ENCODE measurements at regions of chr21 and their contacts with region 1.

Region 1: DNA sequence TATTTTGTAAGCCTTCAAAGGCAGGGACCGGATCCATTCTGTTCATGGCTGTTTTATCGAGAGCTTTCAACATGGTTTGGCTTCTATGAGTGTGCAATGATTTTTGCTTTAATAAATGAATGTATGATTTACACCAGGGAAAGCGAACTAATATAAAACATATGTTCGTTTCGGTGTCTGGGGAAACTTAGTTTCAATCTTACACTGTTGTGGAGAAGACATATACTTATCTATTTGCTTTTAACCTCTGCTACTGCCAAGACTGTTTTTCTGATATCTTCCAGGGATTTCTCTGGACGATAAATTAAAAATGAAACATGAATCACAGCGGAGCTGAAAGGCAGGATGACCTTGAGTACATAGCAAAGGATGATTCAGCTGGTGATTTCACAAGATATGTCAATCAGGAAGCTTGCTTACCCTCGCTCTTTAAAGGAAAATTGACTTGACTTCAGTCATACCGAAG is 14.7 kb upstream of the CYYR1 start:
- DNase-seq: no peak
- ATAC-seq: no peak
- H3K4me3 ChIP-seq: no peak overlapping the region
- H3K27ac ChIP-seq: no peak overlapping the region
- H3K4me1 ChIP-seq: no peaks in the 10 kb centered on the region
- H3K27me3 ChIP-seq: no peaks in the 10 kb centered on the region
- CTCF ChIP-seq: no peak
- POLR2A ChIP-seq: no peak

Region 2: DNA sequence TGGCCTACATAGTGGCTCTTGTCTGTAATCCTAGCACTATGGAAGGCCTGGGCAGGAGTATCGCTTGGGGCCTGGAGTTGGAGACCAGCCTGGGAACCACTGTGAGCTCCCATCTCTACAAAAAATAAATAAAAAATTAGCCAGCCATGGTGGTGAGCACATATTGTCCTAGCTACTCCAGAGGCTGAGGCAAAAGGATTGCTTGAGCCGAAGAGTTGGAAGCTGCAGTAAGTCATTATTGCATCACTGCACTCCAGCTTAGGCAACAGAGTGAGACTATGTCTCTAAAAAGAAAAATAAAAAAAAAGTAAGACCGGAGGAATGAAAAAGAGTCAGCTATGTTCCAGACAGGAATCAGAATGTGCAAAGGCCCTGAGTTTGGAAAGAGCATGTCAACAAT is 130.0 kb before region 1 on chr21:
- in situ Hi-C with region 1: no loop called
- intact Hi-C with region 1: loop called (anchors 5 kb)
- DNase-seq: peak in 1 of 2 donors; percentile 24
- ATAC-seq: peak; percentile 26 to 53
- H3K4me3 ChIP-seq: no peak overlapping the region
- H3K27ac ChIP-seq: no peak overlapping the region
- H3K4me1 ChIP-seq: no peaks in the 10 kb centered on the region
- H3K27me3 ChIP-seq: no peaks in the 10 kb centered on the region
- CTCF ChIP-seq: no peak
- POLR2A ChIP-seq: no peak

Region 3: DNA sequence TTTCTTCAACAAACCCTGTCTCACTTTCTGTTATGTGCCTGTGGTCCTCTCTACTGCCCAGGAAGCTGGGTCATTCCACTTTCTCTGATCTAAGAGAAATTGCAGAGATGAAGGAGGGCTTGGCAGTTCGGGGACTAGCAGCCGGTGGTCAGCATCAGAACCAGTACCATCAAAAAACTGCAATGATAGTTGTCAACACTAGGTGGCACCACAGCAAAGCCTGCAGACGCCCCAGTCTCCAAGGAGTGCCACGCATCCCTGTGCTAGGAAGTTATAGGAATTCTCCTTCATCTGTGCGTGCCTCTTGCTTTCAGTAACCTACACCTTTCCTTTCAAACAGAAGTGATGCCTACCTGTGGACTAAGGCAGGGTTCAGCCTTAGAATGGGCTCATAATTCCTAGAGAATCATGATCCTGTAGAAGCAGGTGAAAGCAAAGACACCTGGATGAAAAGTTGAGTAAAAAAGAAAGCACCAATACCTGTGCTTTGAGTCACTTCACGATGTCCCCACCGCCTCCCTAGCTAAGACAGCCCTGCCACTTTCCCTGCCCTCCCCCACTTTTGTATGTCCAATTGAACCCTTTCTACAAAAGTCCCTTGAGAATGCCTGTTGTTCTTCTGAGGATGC is 128.2 kb after region 1 on chr21:
- in situ Hi-C with region 1: no loop called
- intact Hi-C with region 1: no loop called
- DNase-seq: no peak
- ATAC-seq: peak; percentile 34 to 78
- H3K4me3 ChIP-seq: no peak overlapping the region
- H3K27ac ChIP-seq: no peak overlapping the region
- H3K4me1 ChIP-seq: peaks cover 0 to 7% of the 10 kb centered on the region in 2 donors
- H3K27me3 ChIP-seq: no peaks in the 10 kb centered on the region
- CTCF ChIP-seq: peak in 4 of 5 experiments; percentile 50 to 86 (median 70)
- POLR2A ChIP-seq: no peak

Region 4: GRCh38 chr21:27776925-27777553 is 1189.3 kb after region 1 on chr21:
- in situ Hi-C with region 1: no loop called
- intact Hi-C with region 1: no loop called
- DNase-seq: no peak
- ATAC-seq: no peak
- H3K4me3 ChIP-seq: no peak overlapping the region
- H3K27ac ChIP-seq: no peak overlapping the region
- H3K4me1 ChIP-seq: peaks cover 9 to 10% of the 10 kb centered on the region in 2 donors
- H3K27me3 ChIP-seq: no peaks in the 10 kb centered on the region
- CTCF ChIP-seq: no peak
- POLR2A ChIP-seq: no peak